ENCODE measurements at regions of chr22 and their contacts with region 1.

Region 1: DNA sequence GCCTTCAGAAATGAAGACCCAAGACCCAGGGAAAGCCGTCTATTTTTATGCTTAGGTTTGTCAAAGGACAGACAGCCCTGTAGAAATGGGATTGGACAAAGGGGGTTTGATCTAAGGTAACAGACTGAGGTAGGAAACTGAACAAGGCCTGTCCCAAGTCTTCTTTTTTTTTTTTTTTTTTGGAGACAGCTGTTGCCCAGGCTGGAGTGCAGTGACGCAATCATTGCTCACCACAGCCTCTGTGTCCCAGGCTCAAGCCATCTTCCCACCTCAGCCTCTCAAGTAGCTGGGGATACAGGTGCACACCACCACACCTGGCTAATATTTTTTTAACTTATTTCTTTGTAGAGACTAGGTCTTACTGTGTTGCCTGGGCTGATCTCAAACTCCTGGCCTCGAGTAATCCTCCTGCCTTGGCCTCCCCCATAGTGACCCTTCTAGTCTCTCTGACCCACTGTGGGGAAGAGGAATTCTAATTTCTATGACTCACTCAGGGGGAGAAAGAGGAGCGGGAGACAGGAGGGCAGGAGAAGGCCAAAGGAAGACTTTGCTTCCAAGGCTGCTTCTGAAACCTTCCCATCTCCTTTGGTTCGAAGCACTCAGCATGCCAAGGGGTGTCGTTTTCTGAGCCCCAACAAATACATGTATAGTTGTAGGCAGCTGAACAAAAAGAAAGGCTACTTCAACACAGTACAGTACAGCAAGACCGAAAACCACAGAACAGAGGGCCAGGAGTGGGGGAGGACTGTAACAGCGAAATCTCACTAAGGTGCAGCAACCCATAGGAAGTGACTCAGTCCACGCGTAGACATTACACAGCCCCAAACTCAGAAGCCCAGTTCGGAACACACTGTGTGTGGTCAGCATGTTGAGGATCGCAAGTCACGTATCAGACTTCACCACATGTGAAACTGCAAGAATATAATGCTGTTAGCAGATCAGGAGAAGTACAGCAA is 872 bp downstream of the TMA7B start:
- DNase-seq: peak in 3 of 9 donors; percentile 18 to 63 (median 41)
- ATAC-seq: peak; percentile 95
- H3K4me3 ChIP-seq: no peak overlapping the region
- H3K4me3 Mint-ChIP-seq: peak overlapping the region; percentile 21 to 78 (median 52)
- H3K27ac ChIP-seq: peak overlapping the region; percentile 44
- H3K27ac Mint-ChIP-seq: peak overlapping the region in 7 of 9 donors; percentile 81 to 93 (median 85)
- H3K4me1 ChIP-seq: peaks cover 42 to 48% of the 10 kb centered on the region in 2 donors
- H3K4me1 Mint-ChIP-seq: peaks cover 43 to 68% (median 61%) of the 10 kb centered on the region in 7 donors
- H3K27me3 ChIP-seq: no peaks in the 10 kb centered on the region
- H3K27me3 Mint-ChIP-seq: no peaks in the 10 kb centered on the region

Region 2: DNA sequence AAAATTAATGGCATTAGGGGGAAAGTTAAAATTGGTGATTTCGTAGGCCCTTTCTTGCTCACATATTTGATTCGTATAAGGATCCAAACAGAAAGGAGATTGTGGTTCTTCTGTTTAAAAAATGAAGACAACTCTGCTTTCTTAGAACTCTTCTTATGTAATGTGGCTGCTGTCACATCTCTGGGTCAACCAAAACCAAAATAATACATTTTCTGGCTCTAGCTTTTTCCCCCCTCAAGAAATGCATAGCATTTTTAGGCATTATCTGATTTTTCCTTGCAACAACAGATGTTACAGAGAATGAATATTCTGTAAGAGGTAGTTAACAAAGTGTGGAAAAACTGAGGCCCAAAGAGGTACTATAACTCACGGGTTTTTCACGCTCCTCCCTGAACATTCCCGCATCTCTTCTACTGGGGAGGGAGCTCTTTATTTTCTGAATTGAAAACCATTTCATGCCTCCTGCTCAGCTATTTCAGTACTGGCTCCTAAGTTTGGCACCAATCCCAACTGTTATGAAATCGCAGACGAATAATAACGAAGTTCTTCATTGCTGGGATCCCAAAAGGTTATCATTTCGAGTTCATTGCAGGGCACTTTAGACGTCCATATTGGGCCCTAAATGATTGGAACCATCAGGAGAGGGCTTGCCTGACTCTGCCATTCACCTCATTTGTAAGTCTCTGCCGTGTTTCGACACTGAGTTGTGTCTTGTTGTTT is 43.1 kb before region 1 on chr22:
- CTCF ChIA-PET with region 1: interaction called, 3 read pairs
- POLR2A ChIA-PET with region 1: no interaction called
- intact Hi-C with region 1: loop called in 1 of 2 experiments (anchors 2 kb)
- DNase-seq: peak in 1 of 9 donors; percentile 11
- ATAC-seq: no peak
- H3K4me3 ChIP-seq: peak overlapping the region; percentile 34
- H3K4me3 Mint-ChIP-seq: peak overlapping the region in 9 of 10 donors; percentile 71 to 97 (median 79)
- H3K27ac ChIP-seq: peak overlapping the region; percentile 78
- H3K27ac Mint-ChIP-seq: peak overlapping the region in 6 of 9 donors; percentile 82 to 98 (median 95)
- H3K4me1 ChIP-seq: peaks cover 82 to 91% of the 10 kb centered on the region in 2 donors
- H3K4me1 Mint-ChIP-seq: peaks cover 67 to 99% (median 94%) of the 10 kb centered on the region in 7 donors
- H3K27me3 ChIP-seq: no peaks in the 10 kb centered on the region
- H3K27me3 Mint-ChIP-seq: no peaks in the 10 kb centered on the region

Region 3: GRCh38 chr22:39979048-39979447 is 18.0 kb after region 1 on chr22:
- CTCF ChIA-PET with region 1: no interaction called
- POLR2A ChIA-PET with region 1: interaction called, 5 read pairs
- intact Hi-C with region 1: loop called in 1 of 2 experiments (anchors 2 kb)
- DNase-seq: no peak
- ATAC-seq: peak; percentile 33
- H3K4me3 ChIP-seq: no peak overlapping the region
- H3K4me3 Mint-ChIP-seq: peak overlapping the region in 4 of 10 donors; percentile 6 to 44 (median 29)
- H3K27ac ChIP-seq: peak overlapping the region; percentile 51
- H3K27ac Mint-ChIP-seq: peak overlapping the region in 8 of 9 donors; percentile 49 to 91 (median 80)
- H3K4me1 ChIP-seq: peaks cover 0 to 13% of the 10 kb centered on the region in 2 donors
- H3K4me1 Mint-ChIP-seq: peaks cover 7 to 41% (median 28%) of the 10 kb centered on the region in 7 donors
- H3K27me3 ChIP-seq: no peaks in the 10 kb centered on the region
- H3K27me3 Mint-ChIP-seq: peaks cover 0 to 2% (median 0%) of the 10 kb centered on the region in 5 donors